GM12878 (cell line): ENCODE measurements at regions of chr13 and their contacts with region 1.

Region 1: GRCh38 chr13:49606747-49607648 is 21.3 kb upstream of the ARL11 start:
- DNase-seq: peak; percentile 61
- ATAC-seq: peak; percentile 99
- H3K4me3 ChIP-seq: peak overlapping the region; percentile 63; the same call in 1 of the 2 replicates
- H3K27ac ChIP-seq: peak overlapping the region; percentile 31; the same call in 1 of the 2 replicates
- H3K4me1 ChIP-seq: peaks cover 5% of the 10 kb centered on the region; the same call in 1 of the 2 replicates
- H3K27me3 ChIP-seq: no peaks in the 10 kb centered on the region
- CTCF ChIP-seq: peak; percentile 75 to 95 (median 80)
- EP300 ChIP-seq: no peak
- POLR2A ChIP-seq: peak; percentile 53
- RAD21 ChIP-seq: peak; percentile 91

Region 2: DNA sequence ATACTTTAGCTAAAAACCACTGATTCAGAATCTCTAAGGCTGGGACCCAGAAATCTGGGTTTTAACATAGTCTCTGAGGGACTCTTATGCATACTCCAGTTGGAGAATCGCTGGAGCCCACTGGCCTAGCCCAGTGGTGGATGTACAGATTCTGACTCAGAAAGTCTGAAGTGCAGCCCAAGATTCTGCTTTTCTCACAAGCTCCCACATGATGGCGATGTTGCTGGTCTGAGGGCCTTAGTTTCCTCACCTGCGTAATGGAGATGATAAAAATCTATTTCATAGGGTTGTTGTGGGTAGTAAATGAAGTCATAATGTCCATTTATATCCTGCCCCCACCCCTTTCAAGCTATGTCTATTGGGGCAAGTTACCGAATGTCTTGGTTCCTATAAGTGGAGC is 367.0 kb before region 1 on chr13:
- CTCF ChIA-PET with region 1: interaction called, 5 read pairs
- POLR2A ChIA-PET with region 1: no interaction called
- RAD21 ChIA-PET with region 1: interaction called, 3 read pairs
- SMC1A ChIA-PET with region 1: no interaction called
- in situ Hi-C with region 1: no loop called
- intact Hi-C with region 1: loop called (anchors 5 kb)
- DNase-seq: no peak
- ATAC-seq: peak; percentile 92
- H3K4me3 ChIP-seq: no peak overlapping the region
- H3K27ac ChIP-seq: no peak overlapping the region
- H3K4me1 ChIP-seq: no peaks in the 10 kb centered on the region
- H3K27me3 ChIP-seq: no peaks in the 10 kb centered on the region; a peak in 2 of 4 replicates
- CTCF ChIP-seq: peak; percentile 63 to 70 (median 65)
- EP300 ChIP-seq: no peak
- POLR2A ChIP-seq: no peak
- RAD21 ChIP-seq: peak; percentile 63

Region 3: GRCh38 chr13:49300739-49301589 is 306.0 kb before region 1 on chr13:
- CTCF ChIA-PET with region 1: interaction called, 42 read pairs
- POLR2A ChIA-PET with region 1: no interaction called
- RAD21 ChIA-PET with region 1: interaction called, 11 read pairs
- SMC1A ChIA-PET with region 1: interaction called, 22 read pairs
- in situ Hi-C with region 1: loop called (anchors 5 kb)
- intact Hi-C with region 1: loop called (anchors 1 kb)
- DNase-seq: peak; percentile 42
- ATAC-seq: peak; percentile 96
- H3K4me3 ChIP-seq: no peak overlapping the region
- H3K27ac ChIP-seq: no peak overlapping the region
- H3K4me1 ChIP-seq: peaks cover 3% of the 10 kb centered on the region; the same call in 1 of the 2 replicates
- H3K27me3 ChIP-seq: no peaks in the 10 kb centered on the region
- CTCF ChIP-seq: peak; percentile 90 to 95 (median 94); a peak in 5 of 6 replicates
- EP300 ChIP-seq: no peak
- POLR2A ChIP-seq: peak; percentile 45; the same call in 1 of the 2 replicates
- RAD21 ChIP-seq: peak; percentile 99

Region 4: GRCh38 chr13:49421391-49421790 is 185.6 kb before region 1 on chr13:
- CTCF ChIA-PET with region 1: interaction called, 12 read pairs
- POLR2A ChIA-PET with region 1: no interaction called
- RAD21 ChIA-PET with region 1: interaction called, 8 read pairs
- SMC1A ChIA-PET with region 1: interaction called, 17 read pairs
- in situ Hi-C with region 1: loop called (anchors 5 kb)
- intact Hi-C with region 1: loop called (anchors 1 kb)
- DNase-seq: peak; percentile 24
- ATAC-seq: peak; percentile 99
- H3K4me3 ChIP-seq: no peak overlapping the region
- H3K27ac ChIP-seq: no peak overlapping the region
- H3K4me1 ChIP-seq: no peaks in the 10 kb centered on the region
- H3K27me3 ChIP-seq: no peaks in the 10 kb centered on the region
- CTCF ChIP-seq: peak; percentile 50 to 68 (median 67)
- EP300 ChIP-seq: no peak
- POLR2A ChIP-seq: no peak
- RAD21 ChIP-seq: peak; percentile 77

Region 5: GRCh38 chr13:49495783-49496762 is 110.9 kb before region 1 on chr13 and contains the start of gene PHF11:
- CTCF ChIA-PET with region 1: interaction called, 5 read pairs
- POLR2A ChIA-PET with region 1: interaction called, 3 read pairs
- RAD21 ChIA-PET with region 1: interaction called, 3 read pairs
- SMC1A ChIA-PET with region 1: interaction called, 4 read pairs
- in situ Hi-C with region 1: no loop called
- intact Hi-C with region 1: loop called (anchors 2 kb)
- DNase-seq: peak; percentile 65
- ATAC-seq: peak; percentile 86
- H3K4me3 ChIP-seq: peak within 1 kb of the TSS; percentile 78
- H3K27ac ChIP-seq: peak within 1 kb of the TSS; percentile 94
- H3K4me1 ChIP-seq: peaks cover 6% of the 10 kb centered on the region
- H3K27me3 ChIP-seq: no peaks in the 10 kb centered on the region
- CTCF ChIP-seq: no peak
- EP300 ChIP-seq: no peak
- POLR2A ChIP-seq: peak; percentile 88
- RAD21 ChIP-seq: no peak
- polyA plus RNA-seq, gene PHF11: 16.9 to 23.0 TPM

Region 6: GRCh38 chr13:49502954-49503353 is 104.0 kb before region 1 on chr13:
- CTCF ChIA-PET with region 1: interaction called, 4 read pairs
- POLR2A ChIA-PET with region 1: interaction called, 10 read pairs
- RAD21 ChIA-PET with region 1: no interaction called
- SMC1A ChIA-PET with region 1: no interaction called
- in situ Hi-C with region 1: no loop called
- intact Hi-C with region 1: no loop called
- DNase-seq: no peak
- ATAC-seq: no peak
- H3K4me3 ChIP-seq: no peak overlapping the region
- H3K27ac ChIP-seq: no peak overlapping the region
- H3K4me1 ChIP-seq: no peaks in the 10 kb centered on the region; the same call in 1 of the 2 replicates
- H3K27me3 ChIP-seq: no peaks in the 10 kb centered on the region
- CTCF ChIP-seq: no peak
- EP300 ChIP-seq: no peak
- POLR2A ChIP-seq: no peak
- RAD21 ChIP-seq: no peak

Region 7: DNA sequence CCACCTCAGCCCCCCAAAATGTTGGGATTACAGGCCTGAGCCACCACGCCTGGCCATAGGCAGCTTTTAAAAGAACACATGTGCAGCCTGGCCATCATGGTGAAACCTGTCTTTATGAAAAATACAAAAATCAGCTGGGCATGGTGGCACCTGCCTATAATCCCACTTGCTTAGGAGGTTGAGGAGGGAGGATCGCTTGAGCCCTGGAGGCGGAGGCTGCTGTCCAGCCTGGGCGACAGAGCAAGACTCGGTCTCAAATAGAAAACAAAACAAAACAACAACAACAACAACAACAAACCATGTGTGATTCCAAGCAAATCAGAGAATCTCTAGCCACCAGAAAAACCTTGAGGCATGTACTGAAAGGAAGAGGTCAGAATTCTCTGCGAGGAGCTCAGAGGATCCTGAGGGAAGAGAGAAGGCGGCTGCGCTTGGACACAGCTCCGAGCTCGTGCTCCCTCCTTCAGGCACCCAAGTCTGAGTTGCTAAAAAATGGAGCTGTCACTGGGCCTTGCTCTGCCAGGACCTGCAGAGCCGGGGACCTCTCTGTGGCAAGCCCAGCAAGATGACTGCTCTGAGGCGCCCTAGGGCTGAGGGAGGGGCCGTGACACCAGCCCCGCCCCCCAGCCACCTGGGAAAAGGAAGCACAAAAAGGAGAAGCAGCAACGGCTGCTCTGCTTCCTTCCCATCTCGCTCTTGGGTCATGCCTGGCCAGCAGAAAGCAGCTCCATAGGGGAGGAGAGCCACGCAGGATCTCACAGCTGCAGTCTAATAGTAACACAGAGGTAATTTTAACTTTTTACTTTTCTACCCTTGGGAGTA is 21.0 kb after region 1 on chr13 and contains the start of gene ARL11:
- CTCF ChIA-PET with region 1: interaction called, 5 read pairs
- POLR2A ChIA-PET with region 1: interaction called, 3 read pairs
- RAD21 ChIA-PET with region 1: interaction called, 5 read pairs
- SMC1A ChIA-PET with region 1: interaction called, 24 read pairs
- in situ Hi-C with region 1: no loop called
- intact Hi-C with region 1: no loop called
- DNase-seq: peak; percentile 39
- ATAC-seq: peak; percentile 95
- H3K4me3 ChIP-seq: peak within 1 kb of the TSS; percentile 81
- H3K27ac ChIP-seq: peak within 1 kb of the TSS; percentile 64
- H3K4me1 ChIP-seq: peaks cover 3% of the 10 kb centered on the region; the same call in 1 of the 2 replicates
- H3K27me3 ChIP-seq: no peaks in the 10 kb centered on the region
- CTCF ChIP-seq: no peak
- EP300 ChIP-seq: no peak
- POLR2A ChIP-seq: peak; percentile 83
- RAD21 ChIP-seq: no peak
- polyA plus RNA-seq, gene ARL11: 2.0 to 2.6 TPM